IMR-90 (cell line): ENCODE measurements at regions of chr10 and their contacts with region 1.

Region 1: GRCh38 chr10:133309111-133309719 is 501 bp downstream of the ZNF511 start:
- DNase-seq: peak; percentile 85
- ATAC-seq: peak; percentile 97
- H3K4me3 ChIP-seq: peak overlapping the region; percentile 67
- H3K27ac ChIP-seq: peak overlapping the region; percentile 81
- H3K4me1 ChIP-seq: peaks cover 8% of the 10 kb centered on the region
- H3K27me3 ChIP-seq: no peaks in the 10 kb centered on the region
- CTCF ChIP-seq: no peak
- POLR2A ChIP-seq: no peak
- RAD21 ChIP-seq: no peak

Region 2: DNA sequence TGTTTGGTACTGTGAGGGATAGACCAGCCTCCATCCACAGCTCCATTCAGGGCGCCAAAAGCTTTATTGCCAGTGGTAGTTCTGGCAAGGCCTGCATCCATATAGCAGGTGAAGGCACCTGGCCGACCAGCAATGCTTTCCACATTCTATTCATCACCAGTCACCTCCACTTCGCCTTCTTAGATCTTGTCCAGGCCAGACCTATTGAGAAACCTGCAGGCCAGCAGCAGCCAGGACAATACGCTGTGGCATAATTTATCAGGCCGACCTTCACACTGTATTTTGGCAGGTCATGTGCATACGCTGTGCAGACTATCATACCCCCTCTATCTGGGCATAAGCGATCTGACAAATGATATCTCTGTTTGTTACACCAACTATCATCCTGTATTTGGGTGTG is 164.4 kb before region 1 on chr10:
- CTCF ChIA-PET with region 1: no interaction called
- POLR2A ChIA-PET with region 1: no interaction called
- dilution Hi-C with region 1: no loop called
- in situ Hi-C with region 1: no loop called
- intact Hi-C with region 1: loop called (anchors 5 kb)
- DNase-seq: no peak
- ATAC-seq: no peak
- H3K4me3 ChIP-seq: no peak overlapping the region
- H3K27ac ChIP-seq: no peak overlapping the region
- H3K4me1 ChIP-seq: no peaks in the 10 kb centered on the region; the same call in 1 of the 2 replicates
- H3K27me3 ChIP-seq: peaks cover 12% of the 10 kb centered on the region
- CTCF ChIP-seq: no peak
- POLR2A ChIP-seq: no peak
- RAD21 ChIP-seq: no peak

Region 3: GRCh38 chr10:133159950-133160819 is 149.0 kb before region 1 on chr10 and contains the start of gene KNDC1:
- CTCF ChIA-PET with region 1: no interaction called
- POLR2A ChIA-PET with region 1: no interaction called
- dilution Hi-C with region 1: no loop called
- in situ Hi-C with region 1: no loop called
- intact Hi-C with region 1: loop called (anchors 2 kb)
- DNase-seq: peak; percentile 17
- ATAC-seq: peak; percentile 85
- H3K4me3 ChIP-seq: peak within 1 kb of the TSS; percentile 76
- H3K27ac ChIP-seq: no peak within 1 kb of the TSS; the same call in 1 of the 2 replicates
- H3K4me1 ChIP-seq: peaks cover 15% of the 10 kb centered on the region; the same call in 1 of the 2 replicates
- H3K27me3 ChIP-seq: no peaks in the 10 kb centered on the region; the same call in 1 of the 2 replicates
- CTCF ChIP-seq: no peak
- POLR2A ChIP-seq: no peak
- RAD21 ChIP-seq: no peak
- total RNA-seq, gene KNDC1: 0.18 and 0.56 TPM in 2 replicates